ENCODE measurements at regions of chr18 and their contacts with region 1.

Region 1: DNA sequence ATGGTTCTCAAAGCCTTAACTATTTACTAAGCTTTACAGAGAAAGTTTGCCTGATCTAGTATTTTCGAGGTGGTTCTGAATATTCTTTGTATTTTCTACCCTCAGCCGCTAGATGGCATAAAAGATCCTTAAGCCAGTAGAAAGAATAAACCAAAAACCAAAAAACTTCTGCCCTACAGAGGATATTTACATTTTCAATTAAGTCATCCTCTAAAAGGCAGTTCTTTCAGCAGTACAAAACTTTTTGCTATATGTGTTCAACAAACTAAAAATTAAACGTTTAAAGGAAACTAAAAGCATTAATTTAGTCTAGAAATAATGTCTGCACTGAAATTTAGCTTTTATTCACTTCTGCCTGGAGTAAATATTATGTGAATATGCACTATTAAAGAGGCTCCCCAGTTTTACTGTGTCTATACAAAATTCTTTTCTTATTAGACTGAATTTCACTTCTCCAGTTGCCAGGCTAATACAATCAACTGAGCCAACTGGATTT is 297.5 kb downstream of the PIEZO2 start:
- DNase-seq: no peak
- H3K4me3 ChIP-seq: no peak overlapping the region
- H3K27ac ChIP-seq: no peak overlapping the region
- H3K4me1 ChIP-seq: peaks cover 0 to 3% of the 10 kb centered on the region in 2 donors
- H3K27me3 ChIP-seq: no peaks in the 10 kb centered on the region
- CTCF ChIP-seq: peak; percentile 68 to 83 (median 78)
- POLR2A ChIP-seq: no peak

Region 2: GRCh38 chr18:10560450-10561045 is 291.3 kb before region 1 on chr18:
- intact Hi-C with region 1: no loop called
- DNase-seq: peak; percentile 75 to 93 (median 85)
- H3K4me3 ChIP-seq: no peak overlapping the region
- H3K27ac ChIP-seq: no peak overlapping the region
- H3K4me1 ChIP-seq: no peaks in the 10 kb centered on the region
- H3K27me3 ChIP-seq: no peaks in the 10 kb centered on the region
- CTCF ChIP-seq: peak; percentile 71 to 86 (median 78)
- POLR2A ChIP-seq: no peak

Region 3: DNA sequence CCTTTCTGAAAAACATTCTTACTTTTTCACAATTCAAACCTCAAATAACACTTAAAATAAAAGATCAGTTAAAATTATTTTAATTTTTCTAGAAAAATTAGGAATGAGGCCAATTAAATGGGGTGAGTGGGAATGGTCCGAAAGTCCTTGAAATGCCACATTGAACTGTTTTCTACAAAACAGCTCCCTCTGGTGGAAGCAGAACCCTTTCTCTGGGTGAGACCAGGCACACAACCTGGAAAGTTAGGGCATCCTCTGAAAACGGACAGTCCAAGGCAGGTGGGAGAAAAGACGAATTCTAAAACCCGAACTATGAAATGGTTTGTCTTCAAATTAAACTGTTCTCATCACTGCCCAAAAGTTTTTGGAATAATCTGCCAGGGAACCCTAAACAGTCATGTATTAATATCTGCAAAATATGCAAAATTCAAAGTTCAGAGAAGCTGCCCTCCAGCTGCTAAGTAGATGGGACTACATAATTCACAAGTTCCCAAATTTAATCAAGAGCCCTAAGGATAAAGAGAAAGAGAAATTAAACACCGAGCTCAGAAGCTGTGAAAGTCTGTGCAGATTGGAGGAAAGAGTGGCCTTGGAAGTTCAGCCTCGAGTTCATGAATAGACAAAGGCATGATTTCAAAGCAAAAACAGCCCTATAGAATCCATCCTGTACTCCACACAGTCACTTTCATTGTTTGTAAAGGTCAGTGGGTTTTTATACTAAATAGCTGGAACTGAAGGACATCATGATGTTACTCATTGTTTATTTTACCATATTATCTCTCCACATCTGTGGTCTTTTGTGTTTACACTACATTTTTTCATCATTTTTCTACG is 189.2 kb after region 1 on chr18:
- intact Hi-C with region 1: loop called (anchors 5 kb)
- DNase-seq: peak; percentile 25 to 72 (median 65)
- H3K4me3 ChIP-seq: no peak overlapping the region
- H3K27ac ChIP-seq: no peak overlapping the region
- H3K4me1 ChIP-seq: peaks cover 0 to 6% of the 10 kb centered on the region in 2 donors
- H3K27me3 ChIP-seq: no peaks in the 10 kb centered on the region
- CTCF ChIP-seq: peak; percentile 65 to 85 (median 74)
- POLR2A ChIP-seq: no peak

Region 4: GRCh38 chr18:11155034-11155759 is 303.3 kb after region 1 on chr18:
- intact Hi-C with region 1: loop called (anchors 5 kb)
- DNase-seq: no peak
- H3K4me3 ChIP-seq: no peak overlapping the region
- H3K27ac ChIP-seq: no peak overlapping the region
- H3K4me1 ChIP-seq: no peaks in the 10 kb centered on the region
- H3K27me3 ChIP-seq: peaks cover 9% of the 10 kb centered on the region
- CTCF ChIP-seq: no peak
- POLR2A ChIP-seq: no peak

Measured in adrenal gland (tissue), 19 donors.